ENCODE measurements at regions of chr14 and their contacts with region 1.

Region 1: DNA sequence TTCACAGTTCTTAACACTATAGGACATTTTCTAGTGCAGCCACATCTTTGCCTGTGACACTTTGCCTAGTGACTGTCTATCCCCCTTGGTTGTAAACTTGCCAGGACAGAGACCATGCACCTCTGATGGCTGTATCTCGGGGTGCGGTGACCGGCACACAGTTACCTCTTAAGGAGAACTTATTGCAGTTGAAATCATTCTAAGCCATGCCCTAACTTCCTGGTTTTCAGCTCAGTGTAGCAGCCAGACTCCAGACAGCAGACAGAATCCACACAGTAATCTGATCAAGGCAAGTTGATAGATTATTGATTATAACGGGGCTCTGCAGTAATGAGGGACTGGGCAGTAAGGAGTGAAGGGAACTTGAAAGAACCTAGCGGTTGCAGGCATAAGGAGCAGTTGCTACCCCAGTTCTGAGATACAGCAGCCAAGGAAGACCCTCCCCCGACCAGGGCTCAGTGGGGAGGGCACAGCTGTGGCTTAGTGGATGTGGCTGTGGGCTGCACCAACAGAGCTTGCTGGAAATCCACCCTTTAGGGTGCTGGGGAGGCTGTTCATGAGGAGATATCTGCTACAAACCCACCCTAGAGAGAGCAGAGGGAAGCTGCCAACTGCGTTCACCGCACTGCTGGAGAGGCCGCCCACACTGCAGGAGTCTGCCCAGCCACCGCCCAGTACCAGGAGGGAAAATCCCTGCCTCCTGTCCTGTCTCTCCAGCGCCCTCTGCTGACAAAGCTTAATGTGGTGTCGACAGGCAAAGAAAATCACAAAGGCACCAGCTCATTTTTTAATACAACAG is 58.2 kb upstream of the BEGAIN start:
- DNase-seq: peak; percentile 65 to 84 (median 81)
- ATAC-seq: peak; percentile 97
- H3K4me3 ChIP-seq: no peak overlapping the region
- H3K4me3 Mint-ChIP-seq: peak overlapping the region; percentile 1 to 77 (median 22)
- H3K27ac ChIP-seq: no peak overlapping the region
- H3K27ac Mint-ChIP-seq: peak overlapping the region; percentile 21 to 80 (median 66)
- H3K4me1 ChIP-seq: peaks cover 31% of the 10 kb centered on the region in 2 donors
- H3K4me1 Mint-ChIP-seq: peaks cover 33 to 57% (median 54%) of the 10 kb centered on the region in 7 donors
- H3K27me3 ChIP-seq: no peaks in the 10 kb centered on the region
- H3K27me3 Mint-ChIP-seq: peaks cover 0 to 23% (median 0%) of the 10 kb centered on the region in 5 donors

Region 2: GRCh38 chr14:100285021-100285912 is 360.1 kb before region 1 on chr14:
- CTCF ChIA-PET with region 1: no interaction called
- POLR2A ChIA-PET with region 1: no interaction called
- intact Hi-C with region 1: loop called in 1 of 2 experiments (anchors 1 kb)
- DNase-seq: peak; percentile 71 to 92 (median 79)
- ATAC-seq: peak; percentile 97
- H3K4me3 ChIP-seq: peak overlapping the region; percentile 71
- H3K4me3 Mint-ChIP-seq: peak overlapping the region; percentile 27 to 91 (median 73)
- H3K27ac ChIP-seq: peak overlapping the region; percentile 85
- H3K27ac Mint-ChIP-seq: peak overlapping the region in 5 of 9 donors; percentile 9 to 87 (median 59)
- H3K4me1 ChIP-seq: peaks cover 0 to 6% of the 10 kb centered on the region in 2 donors
- H3K4me1 Mint-ChIP-seq: peaks cover 2 to 21% (median 8%) of the 10 kb centered on the region in 7 donors
- H3K27me3 ChIP-seq: no peaks in the 10 kb centered on the region
- H3K27me3 Mint-ChIP-seq: no peaks in the 10 kb centered on the region

Region 3: DNA sequence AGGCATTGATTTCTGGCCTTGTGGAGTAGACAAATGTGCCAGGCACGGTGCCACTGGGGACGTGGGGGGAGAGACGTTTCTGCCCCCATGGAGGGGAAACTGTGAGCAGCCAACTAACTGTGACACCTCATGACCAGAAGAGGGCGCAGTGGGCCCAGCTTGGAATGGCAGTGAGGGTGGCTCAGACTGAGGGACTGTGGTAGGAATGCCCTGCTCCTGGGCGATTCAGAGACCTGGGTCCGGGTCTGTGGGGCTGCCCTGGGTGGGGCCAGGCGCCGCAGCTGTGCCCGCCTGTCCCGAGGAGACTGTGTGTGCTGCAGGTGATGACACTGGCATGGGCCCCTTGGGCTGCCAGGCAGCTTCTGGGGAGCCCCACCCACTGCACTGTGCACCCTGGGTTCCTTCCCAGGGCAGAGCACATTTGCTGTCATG is 261.6 kb before region 1 on chr14:
- CTCF ChIA-PET with region 1: interaction called, 69 read pairs
- POLR2A ChIA-PET with region 1: interaction called, 4 read pairs
- intact Hi-C with region 1: loop called (anchors 1 kb)
- DNase-seq: peak; percentile 39 to 71 (median 55)
- ATAC-seq: peak; percentile 92
- H3K4me3 ChIP-seq: no peak overlapping the region
- H3K4me3 Mint-ChIP-seq: no peak overlapping the region
- H3K27ac ChIP-seq: no peak overlapping the region
- H3K27ac Mint-ChIP-seq: peak overlapping the region in 1 of 9 donors; percentile 75
- H3K4me1 ChIP-seq: peaks cover 0 to 11% of the 10 kb centered on the region in 2 donors
- H3K4me1 Mint-ChIP-seq: peaks cover 4 to 26% (median 21%) of the 10 kb centered on the region in 7 donors
- H3K27me3 ChIP-seq: no peaks in the 10 kb centered on the region
- H3K27me3 Mint-ChIP-seq: no peaks in the 10 kb centered on the region

Region 4: GRCh38 chr14:100524933-100525243 is 120.5 kb before region 1 on chr14:
- CTCF ChIA-PET with region 1: interaction called, 17 read pairs
- POLR2A ChIA-PET with region 1: interaction called, 4 read pairs
- intact Hi-C with region 1: loop called (anchors 1 to 2 kb)
- DNase-seq: peak in 1 of 9 donors; percentile 20
- ATAC-seq: peak; percentile 41
- H3K4me3 ChIP-seq: no peak overlapping the region
- H3K4me3 Mint-ChIP-seq: no peak overlapping the region
- H3K27ac ChIP-seq: no peak overlapping the region
- H3K27ac Mint-ChIP-seq: no peak overlapping the region
- H3K4me1 ChIP-seq: no peaks in the 10 kb centered on the region
- H3K4me1 Mint-ChIP-seq: no peaks in the 10 kb centered on the region
- H3K27me3 ChIP-seq: no peaks in the 10 kb centered on the region
- H3K27me3 Mint-ChIP-seq: peaks cover 0 to 3% (median 0%) of the 10 kb centered on the region in 5 donors

Region 5: GRCh38 chr14:100586403-100587085 is 58.8 kb before region 1 on chr14:
- CTCF ChIA-PET with region 1: interaction called, 4 read pairs
- POLR2A ChIA-PET with region 1: no interaction called
- intact Hi-C with region 1: loop called in 1 of 2 experiments (anchors 2 kb)
- DNase-seq: peak in 1 of 9 donors; percentile 34
- ATAC-seq: peak; percentile 3
- H3K4me3 ChIP-seq: peak overlapping the region; percentile 27
- H3K4me3 Mint-ChIP-seq: peak overlapping the region; percentile 42 to 80 (median 68)
- H3K27ac ChIP-seq: no peak overlapping the region
- H3K27ac Mint-ChIP-seq: no peak overlapping the region
- H3K4me1 ChIP-seq: peaks cover 3 to 6% of the 10 kb centered on the region in 2 donors
- H3K4me1 Mint-ChIP-seq: peaks cover 0 to 6% (median 0%) of the 10 kb centered on the region in 7 donors
- H3K27me3 ChIP-seq: no peaks in the 10 kb centered on the region
- H3K27me3 Mint-ChIP-seq: peaks cover 13 to 29% (median 22%) of the 10 kb centered on the region in 5 donors

Region 6: GRCh38 chr14:100602637-100603230 is 42.7 kb before region 1 on chr14:
- CTCF ChIA-PET with region 1: no interaction called
- POLR2A ChIA-PET with region 1: no interaction called
- intact Hi-C with region 1: no loop called
- DNase-seq: no peak
- ATAC-seq: no peak
- H3K4me3 ChIP-seq: no peak overlapping the region
- H3K4me3 Mint-ChIP-seq: no peak overlapping the region
- H3K27ac ChIP-seq: no peak overlapping the region
- H3K27ac Mint-ChIP-seq: no peak overlapping the region
- H3K4me1 ChIP-seq: no peaks in the 10 kb centered on the region
- H3K4me1 Mint-ChIP-seq: no peaks in the 10 kb centered on the region
- H3K27me3 ChIP-seq: no peaks in the 10 kb centered on the region
- H3K27me3 Mint-ChIP-seq: peaks cover 6 to 42% (median 18%) of the 10 kb centered on the region in 5 donors

Region 7: DNA sequence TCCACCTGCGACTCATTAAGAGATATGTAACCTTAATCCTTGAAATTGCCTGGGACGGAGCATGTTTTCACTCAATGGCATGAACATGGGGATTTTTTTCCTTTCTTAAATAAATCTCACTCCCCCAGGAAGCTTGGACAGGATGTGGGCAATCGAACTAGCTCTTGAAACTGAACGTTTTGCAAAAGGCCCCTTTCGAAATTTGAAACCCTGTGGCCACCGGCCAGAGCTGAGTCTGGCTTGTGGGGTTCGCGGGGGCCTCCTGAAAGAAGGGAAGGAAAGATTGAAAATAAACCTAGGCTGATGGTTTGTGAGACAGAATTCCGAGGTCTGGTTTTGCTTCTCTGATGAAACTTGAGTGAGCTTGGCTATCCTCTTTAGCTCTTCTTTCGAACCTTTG is 359.6 kb after region 1 on chr14:
- CTCF ChIA-PET with region 1: no interaction called
- POLR2A ChIA-PET with region 1: no interaction called
- intact Hi-C with region 1: no loop called
- DNase-seq: no peak
- ATAC-seq: no peak
- H3K4me3 ChIP-seq: no peak overlapping the region
- H3K4me3 Mint-ChIP-seq: no peak overlapping the region
- H3K27ac ChIP-seq: no peak overlapping the region
- H3K27ac Mint-ChIP-seq: no peak overlapping the region
- H3K4me1 ChIP-seq: no peaks in the 10 kb centered on the region
- H3K4me1 Mint-ChIP-seq: peaks cover 0 to 9% (median 0%) of the 10 kb centered on the region in 7 donors
- H3K27me3 ChIP-seq: no peaks in the 10 kb centered on the region
- H3K27me3 Mint-ChIP-seq: peaks cover 7 to 70% (median 44%) of the 10 kb centered on the region in 5 donors